ENCODE measurements at regions of chr2 and their contacts with region 1.

Region 1: GRCh38 chr2:241271641-241272297 is 43.7 kb downstream of the HDLBP start:
- DNase-seq: peak; percentile 4 to 73 (median 64)
- ATAC-seq: peak; percentile 65
- H3K4me3 ChIP-seq: peak overlapping the region; percentile 44 to 66
- H3K4me3 Mint-ChIP-seq: peak overlapping the region; percentile 95
- H3K27ac ChIP-seq: peak overlapping the region; percentile 25 to 27
- H3K27ac Mint-ChIP-seq: peak overlapping the region; percentile 90
- H3K4me1 ChIP-seq: peaks cover 13% of the 10 kb centered on the region
- H3K4me1 Mint-ChIP-seq: peaks cover 52% of the 10 kb centered on the region
- H3K27me3 ChIP-seq: no peaks in the 10 kb centered on the region
- H3K27me3 Mint-ChIP-seq: no peaks in the 10 kb centered on the region
- CTCF ChIP-seq: no peak

Region 2: DNA sequence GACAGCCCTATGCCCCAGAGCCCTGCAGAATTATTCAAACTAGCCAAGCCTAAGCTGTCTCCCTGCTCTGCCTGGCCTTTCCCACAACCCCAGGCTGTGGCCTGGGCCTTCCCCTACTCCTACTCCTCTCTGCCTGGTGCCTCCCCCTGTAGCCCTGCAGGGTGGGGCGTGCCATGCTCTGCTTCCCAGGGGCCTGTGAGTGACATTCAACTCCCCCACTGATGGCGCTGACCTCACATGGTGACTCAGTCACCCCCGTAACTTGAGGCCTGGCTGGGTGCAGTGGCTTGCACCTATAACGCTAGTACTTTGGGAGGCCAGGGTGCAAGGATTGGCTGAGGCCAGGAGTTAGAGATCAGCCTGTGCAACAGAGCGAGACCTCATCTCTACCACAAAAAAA is 512.3 kb before region 1 on chr2:
- CTCF ChIA-PET with region 1: no interaction called
- POLR2A ChIA-PET with region 1: no interaction called
- intact Hi-C with region 1: no loop called
- DNase-seq: no peak
- ATAC-seq: no peak
- H3K4me3 ChIP-seq: no peak overlapping the region
- H3K4me3 Mint-ChIP-seq: no peak overlapping the region
- H3K27ac ChIP-seq: no peak overlapping the region
- H3K27ac Mint-ChIP-seq: peak overlapping the region; percentile 45
- H3K4me1 ChIP-seq: no peaks in the 10 kb centered on the region
- H3K4me1 Mint-ChIP-seq: no peaks in the 10 kb centered on the region
- H3K27me3 ChIP-seq: no peaks in the 10 kb centered on the region
- H3K27me3 Mint-ChIP-seq: no peaks in the 10 kb centered on the region
- CTCF ChIP-seq: no peak

Region 3: GRCh38 chr2:241617431-241618154 is 345.8 kb after region 1 on chr2:
- CTCF ChIA-PET with region 1: no interaction called
- POLR2A ChIA-PET with region 1: no interaction called
- intact Hi-C with region 1: loop called in 1 of 2 experiments (anchors 2 kb)
- DNase-seq: peak in 6 of 9 experiments; percentile 11 to 80 (median 46)
- ATAC-seq: peak; percentile 86
- H3K4me3 ChIP-seq: peak overlapping the region; percentile 55 to 73
- H3K4me3 Mint-ChIP-seq: peak overlapping the region; percentile 89
- H3K27ac ChIP-seq: peak overlapping the region; percentile 61 to 70
- H3K27ac Mint-ChIP-seq: peak overlapping the region; percentile 88
- H3K4me1 ChIP-seq: peaks cover 15% of the 10 kb centered on the region
- H3K4me1 Mint-ChIP-seq: peaks cover 31% of the 10 kb centered on the region
- H3K27me3 ChIP-seq: no peaks in the 10 kb centered on the region
- H3K27me3 Mint-ChIP-seq: no peaks in the 10 kb centered on the region
- CTCF ChIP-seq: no peak

Measured in CD8-positive, alpha-beta T cell (primary cell).